Activated CD4-positive, alpha-beta T cell treated with anti-CD3 and anti-CD28 coated beads for 36 hours (primary cell): ENCODE measurements at regions of chr19 and their contacts with region 1.

Region 1: DNA sequence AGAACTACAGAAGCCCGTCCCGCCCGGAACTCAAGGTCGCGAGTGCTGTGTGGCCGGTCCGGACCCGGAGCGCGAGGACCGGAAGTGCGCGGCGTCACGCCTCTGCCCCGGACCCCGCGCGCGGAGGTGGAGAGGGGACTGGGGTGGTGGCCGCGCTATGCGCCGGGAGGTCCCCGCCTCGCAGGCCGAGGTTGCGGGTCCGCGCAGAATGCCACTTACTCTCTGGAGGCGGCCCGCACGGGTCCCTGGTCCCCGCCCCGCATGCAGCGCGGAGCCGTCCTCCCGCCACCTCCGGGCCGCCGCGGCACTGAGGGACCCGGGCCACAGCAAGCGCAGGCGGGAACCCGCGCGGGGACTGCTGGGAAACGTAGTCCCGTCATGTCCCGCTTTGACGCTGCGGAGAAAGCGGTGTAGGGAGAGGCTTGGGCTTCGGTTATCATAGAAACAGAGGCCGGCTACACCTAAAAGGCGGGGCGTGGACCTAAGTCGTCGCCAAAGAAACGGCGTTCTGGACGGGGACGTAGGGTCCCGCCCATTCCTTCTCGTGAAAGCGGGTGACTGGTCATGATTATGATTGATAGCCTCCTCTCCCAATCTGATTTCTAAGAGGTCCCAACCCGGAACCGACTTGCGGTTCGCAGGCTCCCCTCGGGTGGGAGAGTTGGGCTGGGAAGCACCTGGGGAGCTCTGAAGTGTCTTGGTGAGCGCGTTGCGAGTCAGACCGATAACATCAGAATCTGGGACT is at the start of gene ZNF837:
- DNase-seq: peak; percentile 99
- ATAC-seq: peak; percentile 89
- H3K4me3 Mint-ChIP-seq: peak within 1 kb of the TSS; percentile 91
- H3K27ac Mint-ChIP-seq: peak within 1 kb of the TSS; percentile 94
- H3K4me1 Mint-ChIP-seq: peaks cover 19% of the 10 kb centered on the region
- H3K27me3 Mint-ChIP-seq: no peaks in the 10 kb centered on the region
- total RNA-seq, gene ZNF837: 2.0 to 2.5 TPM

Region 2: DNA sequence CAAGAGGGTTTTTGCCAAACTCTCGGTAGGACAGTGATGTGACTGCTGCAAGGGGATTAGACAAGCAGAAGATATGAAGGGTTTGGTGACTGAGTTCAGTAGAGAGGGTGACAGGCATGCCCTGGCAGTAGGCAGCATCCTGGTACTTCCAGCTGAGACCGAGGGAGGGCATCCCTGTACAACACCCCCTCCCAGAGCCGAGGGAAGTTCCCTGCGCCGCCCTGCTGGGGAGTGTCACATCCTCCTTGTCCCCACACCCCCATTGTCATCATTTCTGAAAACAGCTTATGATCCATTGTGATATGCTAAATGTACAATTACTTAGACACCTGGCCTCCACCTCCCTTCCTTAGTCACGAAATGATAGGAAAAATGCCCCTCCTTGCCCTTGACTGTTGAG is 137.5 kb before region 1 on chr19:
- CTCF ChIA-PET with region 1: no interaction called
- POLR2A ChIA-PET with region 1: no interaction called
- intact Hi-C with region 1: no loop called
- DNase-seq: no peak
- ATAC-seq: no peak
- H3K4me3 Mint-ChIP-seq: no peak overlapping the region
- H3K27ac Mint-ChIP-seq: no peak overlapping the region
- H3K4me1 Mint-ChIP-seq: peaks cover under 1% of the 10 kb centered on the region
- H3K27me3 Mint-ChIP-seq: no peaks in the 10 kb centered on the region

Region 3: DNA sequence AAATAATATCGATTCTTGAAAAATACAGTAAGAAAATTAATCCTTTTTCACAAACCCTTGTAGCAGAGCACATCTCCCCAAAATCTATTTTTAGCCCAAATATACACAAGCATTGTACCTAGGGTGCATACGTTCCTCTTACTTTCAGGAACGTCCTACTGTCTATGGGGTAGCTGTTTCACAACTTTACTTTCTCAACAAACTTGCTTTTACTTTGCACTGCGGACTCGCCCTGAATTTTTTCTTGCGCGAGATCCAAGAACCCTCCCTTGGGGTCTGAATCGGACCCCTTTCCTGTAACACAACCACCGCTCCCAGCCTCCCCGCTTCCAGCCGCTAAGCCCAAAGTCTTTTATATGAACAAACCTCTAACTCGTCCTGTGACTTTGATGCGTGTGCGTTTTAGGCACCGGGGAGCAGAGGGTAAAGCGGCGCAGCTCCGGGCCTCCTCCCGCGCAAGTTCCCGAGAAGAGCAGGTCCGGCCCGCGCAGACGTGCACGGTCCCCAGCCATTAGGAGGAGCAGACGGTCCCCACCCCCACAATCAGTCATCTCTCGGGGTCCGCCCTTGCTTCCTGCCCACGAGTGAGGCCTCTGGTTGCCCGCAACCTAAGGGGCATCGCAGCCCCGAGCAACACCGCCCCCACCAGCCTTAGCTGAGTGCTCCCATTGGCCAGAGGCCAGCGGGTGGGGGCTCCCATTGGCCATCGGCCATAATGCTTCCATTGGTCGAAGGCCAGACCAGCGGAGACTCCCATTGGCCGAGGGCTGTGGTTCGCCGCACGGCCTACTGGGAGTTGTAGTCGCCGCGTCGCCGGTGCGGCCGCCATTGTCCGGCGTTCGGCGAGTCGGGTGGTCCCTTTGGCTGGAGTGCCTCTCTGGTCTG is 102.5 kb before region 1 on chr19 and contains the start of gene ZNF8:
- CTCF ChIA-PET with region 1: no interaction called
- POLR2A ChIA-PET with region 1: no interaction called
- intact Hi-C with region 1: loop called in 1 of 2 experiments (anchors 1 kb)
- DNase-seq: peak; percentile 99
- ATAC-seq: peak; percentile 98
- H3K4me3 Mint-ChIP-seq: peak within 1 kb of the TSS; percentile 98
- H3K27ac Mint-ChIP-seq: peak within 1 kb of the TSS; percentile 95
- H3K4me1 Mint-ChIP-seq: peaks cover 28% of the 10 kb centered on the region
- H3K27me3 Mint-ChIP-seq: no peaks in the 10 kb centered on the region
- total RNA-seq, gene ZNF8: 4.4 to 4.5 TPM

Region 4: GRCh38 chr19:58362272-58362994 is 18.5 kb before region 1 on chr19 and contains the start of gene ZNF497:
- CTCF ChIA-PET with region 1: interaction called, 3 read pairs
- POLR2A ChIA-PET with region 1: interaction called, 3 read pairs
- intact Hi-C with region 1: loop called (anchors 1 kb)
- DNase-seq: peak; percentile 99
- ATAC-seq: peak; percentile 94
- H3K4me3 Mint-ChIP-seq: peak within 1 kb of the TSS; percentile 86
- H3K27ac Mint-ChIP-seq: peak within 1 kb of the TSS; percentile 93
- H3K4me1 Mint-ChIP-seq: peaks cover 7% of the 10 kb centered on the region
- H3K27me3 Mint-ChIP-seq: no peaks in the 10 kb centered on the region
- total RNA-seq, gene ZNF497: 1.1 to 1.5 TPM

Region 5: DNA sequence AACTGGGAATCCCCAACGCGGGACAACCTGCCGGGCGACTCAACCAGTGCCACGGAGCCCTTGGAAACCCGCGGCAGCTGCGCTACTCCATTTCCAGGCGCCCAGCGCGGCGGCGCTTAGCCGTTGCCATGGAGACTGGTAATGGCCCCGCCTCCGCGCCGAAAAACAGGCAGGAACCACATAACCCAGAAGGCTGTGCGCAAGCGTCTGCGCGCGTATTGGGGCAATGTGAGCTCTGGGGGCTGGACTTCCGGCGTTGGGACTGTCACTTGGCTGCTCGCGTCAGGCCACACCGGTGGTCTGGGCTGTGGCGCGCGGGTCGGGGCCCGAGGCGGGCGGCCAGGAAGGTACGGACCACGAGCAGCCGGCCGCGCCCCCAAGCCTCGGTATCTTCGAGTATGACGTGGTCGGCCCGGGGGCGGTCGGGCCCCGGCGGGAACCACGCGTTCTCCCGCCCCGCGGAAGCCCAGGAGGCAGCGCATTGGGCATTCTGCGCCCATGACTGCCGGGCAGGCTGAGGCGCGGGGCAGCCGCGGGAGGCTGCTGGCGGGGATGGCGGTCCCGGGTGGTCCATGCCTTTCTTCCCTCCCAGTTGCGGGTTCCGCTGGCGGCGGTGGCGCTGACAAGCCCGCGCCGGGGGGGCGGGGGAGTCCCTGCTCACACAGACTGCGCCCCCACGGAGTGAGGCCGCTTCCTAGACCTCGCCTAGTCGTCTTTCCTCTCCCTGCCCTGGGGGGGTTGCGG is 70.6 kb after region 1 on chr19 and contains the start of gene ZNF324B:
- CTCF ChIA-PET with region 1: no interaction called
- POLR2A ChIA-PET with region 1: no interaction called
- intact Hi-C with region 1: loop called in 1 of 2 experiments (anchors 1 kb)
- DNase-seq: peak; percentile 98
- ATAC-seq: peak; percentile 99
- H3K4me3 Mint-ChIP-seq: peak within 1 kb of the TSS; percentile 77
- H3K27ac Mint-ChIP-seq: peak within 1 kb of the TSS; percentile 55
- H3K4me1 Mint-ChIP-seq: peaks cover 25% of the 10 kb centered on the region
- H3K27me3 Mint-ChIP-seq: peaks cover 15% of the 10 kb centered on the region
- total RNA-seq, gene ZNF324B: 5.8 to 7.5 TPM

Region 6: GRCh38 chr19:58485635-58486034 is 104.7 kb after region 1 on chr19:
- CTCF ChIA-PET with region 1: no interaction called
- POLR2A ChIA-PET with region 1: no interaction called
- intact Hi-C with region 1: no loop called
- DNase-seq: no peak
- ATAC-seq: no peak
- H3K4me3 Mint-ChIP-seq: no peak overlapping the region
- H3K27ac Mint-ChIP-seq: no peak overlapping the region
- H3K4me1 Mint-ChIP-seq: peaks cover 7% of the 10 kb centered on the region
- H3K27me3 Mint-ChIP-seq: no peaks in the 10 kb centered on the region

Region 7: GRCh38 chr19:58513694-58514563 is 133.0 kb after region 1 on chr19:
- CTCF ChIA-PET with region 1: no interaction called
- POLR2A ChIA-PET with region 1: no interaction called
- intact Hi-C with region 1: loop called in 1 of 2 experiments (anchors 1 kb)
- DNase-seq: peak; percentile 99
- ATAC-seq: peak; percentile 88
- H3K4me3 Mint-ChIP-seq: peak overlapping the region; percentile 88
- H3K27ac Mint-ChIP-seq: peak overlapping the region; percentile 81
- H3K4me1 Mint-ChIP-seq: peaks cover 27% of the 10 kb centered on the region
- H3K27me3 Mint-ChIP-seq: no peaks in the 10 kb centered on the region

Region 8: DNA sequence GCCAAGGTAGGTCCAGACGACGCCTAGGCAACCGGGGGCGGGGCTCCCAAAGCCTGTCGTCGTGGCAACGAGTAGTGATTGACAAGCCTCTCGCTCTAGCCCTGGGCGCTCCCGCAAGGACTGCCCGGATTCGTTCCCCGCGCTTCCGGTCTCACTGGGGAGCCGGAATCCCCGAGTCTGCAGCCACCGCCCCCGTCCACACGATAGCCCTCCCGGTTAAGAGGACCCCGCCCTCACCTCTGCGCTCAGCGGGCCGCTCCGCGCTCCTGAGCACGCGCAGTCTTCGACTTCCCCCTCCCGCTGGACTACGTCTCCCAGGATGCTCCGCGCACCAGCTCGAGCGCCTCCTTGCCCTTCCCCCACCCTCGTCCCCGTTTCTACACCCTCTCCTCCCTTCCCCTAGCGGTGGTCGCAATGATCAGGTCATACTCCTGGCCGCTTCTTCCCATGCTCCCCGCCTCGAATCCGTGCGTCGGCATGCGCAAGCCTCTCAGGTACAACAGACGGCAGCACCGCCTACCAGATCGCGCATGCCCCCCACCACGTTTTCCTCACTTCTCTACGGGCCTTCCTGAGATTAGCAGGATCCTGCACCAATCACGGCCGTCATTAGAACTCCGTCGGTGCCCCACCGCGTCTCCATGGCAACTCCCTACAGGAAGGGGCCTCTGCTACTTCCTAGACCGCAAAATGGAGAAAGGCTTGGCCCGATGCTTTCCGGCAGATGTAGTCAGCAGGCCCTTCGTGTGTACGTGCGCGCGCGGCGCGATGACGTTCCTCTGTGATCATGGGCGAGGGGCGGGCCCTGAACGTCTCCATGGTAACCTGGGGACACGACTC is 192.1 kb after region 1 on chr19 and contains the start of gene MZF1:
- CTCF ChIA-PET with region 1: no interaction called
- POLR2A ChIA-PET with region 1: interaction called, 3 read pairs
- intact Hi-C with region 1: loop called in 1 of 2 experiments (anchors 1 kb)
- DNase-seq: peak; percentile 100
- ATAC-seq: peak; percentile 69
- H3K4me3 Mint-ChIP-seq: peak within 1 kb of the TSS; percentile 95
- H3K27ac Mint-ChIP-seq: peak within 1 kb of the TSS; percentile 100
- H3K4me1 Mint-ChIP-seq: peaks cover 38% of the 10 kb centered on the region
- H3K27me3 Mint-ChIP-seq: no peaks in the 10 kb centered on the region
- total RNA-seq, gene MZF1: 14.3 to 15.0 TPM